Activated B cell treated with CpG ODN at 0.5 μM for 24 hours (primary cell): ENCODE measurements at regions of chr17 and their contacts with region 1.

Region 1: DNA sequence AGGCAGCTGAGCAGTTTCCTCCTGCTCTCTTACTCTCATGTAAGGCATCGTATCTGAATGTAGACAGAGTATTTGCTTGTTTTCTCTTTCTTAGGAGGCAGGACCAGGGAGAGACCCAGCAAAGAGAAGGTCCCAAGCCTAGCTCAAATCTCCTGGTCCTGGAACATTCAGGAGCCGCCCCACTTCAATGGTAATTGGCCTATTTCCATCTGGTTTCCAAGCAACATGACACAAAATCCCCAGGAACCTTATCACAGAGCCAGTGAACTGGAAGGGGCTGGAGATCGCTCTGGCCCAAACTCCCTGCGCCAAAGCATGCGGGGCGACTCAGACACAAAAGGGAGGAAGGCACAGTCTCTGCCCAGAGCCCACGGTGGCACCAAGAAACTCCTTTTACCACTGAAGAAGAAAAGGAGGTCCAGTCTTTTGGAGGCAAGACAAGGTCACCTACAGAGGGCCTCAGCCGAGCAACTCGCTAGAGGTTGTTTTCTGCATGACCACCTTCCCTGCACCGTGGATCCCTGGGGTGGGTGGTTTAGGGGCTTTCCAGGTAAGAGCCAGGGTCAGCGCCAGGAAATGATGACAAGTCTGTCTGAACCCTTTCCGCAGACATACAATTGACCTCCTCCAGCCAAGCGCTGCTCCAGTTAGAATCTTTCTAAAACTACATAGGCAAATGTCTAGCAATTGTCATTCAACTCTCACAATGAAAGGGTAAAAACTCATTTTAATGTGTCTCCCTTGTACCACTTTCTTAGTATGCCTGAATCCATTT is 394.7 kb downstream of the SOX9 start:
- DNase-seq: no peak
- ATAC-seq: peak; percentile 34
- H3K4me3 Mint-ChIP-seq: no peak overlapping the region
- H3K27ac Mint-ChIP-seq: no peak overlapping the region
- H3K4me1 Mint-ChIP-seq: peaks cover 4% of the 10 kb centered on the region
- H3K27me3 Mint-ChIP-seq: no peaks in the 10 kb centered on the region
- CTCF ChIP-seq: no peak

Region 2: DNA sequence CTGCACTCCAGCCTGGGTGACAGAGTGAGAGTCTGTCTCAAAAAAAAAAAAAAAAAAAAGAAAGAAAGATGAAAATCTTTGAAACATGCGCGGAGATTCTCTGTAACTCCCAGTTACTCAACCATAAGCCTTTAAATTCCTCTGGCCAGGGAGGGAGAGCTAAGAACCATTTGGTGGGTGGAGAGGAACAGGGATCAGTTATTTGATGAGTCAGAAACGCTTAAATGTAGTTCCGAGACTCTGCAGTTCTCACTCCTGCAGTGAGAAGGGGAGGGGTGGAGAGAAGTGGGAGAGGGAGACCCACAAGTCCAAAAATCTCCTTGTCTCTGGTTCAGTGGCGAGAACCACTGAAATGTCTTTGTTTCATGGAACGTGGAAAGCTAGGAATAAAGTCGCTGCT is 128.0 kb before region 1 on chr17:
- CTCF ChIA-PET with region 1: no interaction called
- POLR2A ChIA-PET with region 1: no interaction called
- intact Hi-C with region 1: no loop called
- DNase-seq: no peak
- ATAC-seq: no peak
- H3K4me3 Mint-ChIP-seq: no peak overlapping the region
- H3K27ac Mint-ChIP-seq: no peak overlapping the region
- H3K4me1 Mint-ChIP-seq: peaks cover 2% of the 10 kb centered on the region
- H3K27me3 Mint-ChIP-seq: peaks cover 5% of the 10 kb centered on the region
- CTCF ChIP-seq: no peak

Region 3: DNA sequence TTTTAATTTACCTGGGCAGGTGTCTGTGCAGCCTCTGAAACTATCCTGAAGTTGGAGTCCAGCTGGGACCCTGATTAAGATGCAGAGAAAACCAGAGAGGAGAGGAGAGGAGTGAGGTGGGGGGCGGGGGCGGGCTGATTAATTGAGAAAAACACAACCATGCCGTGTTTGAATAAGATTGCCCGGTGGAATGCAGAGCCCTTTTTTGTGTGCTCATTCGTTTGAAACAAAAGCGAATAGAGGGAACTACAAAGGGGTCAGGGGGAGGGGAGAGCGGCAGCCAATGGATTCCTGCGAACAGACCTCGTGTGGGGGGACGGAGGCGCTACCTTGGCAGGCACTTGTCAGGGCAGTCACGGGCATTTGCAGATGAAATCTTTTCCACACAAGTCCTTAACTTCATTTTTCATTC is 38.9 kb before region 1 on chr17:
- CTCF ChIA-PET with region 1: no interaction called
- POLR2A ChIA-PET with region 1: interaction called, 12 read pairs
- intact Hi-C with region 1: no loop called
- DNase-seq: no peak
- ATAC-seq: no peak
- H3K4me3 Mint-ChIP-seq: no peak overlapping the region
- H3K27ac Mint-ChIP-seq: no peak overlapping the region
- H3K4me1 Mint-ChIP-seq: no peaks in the 10 kb centered on the region
- H3K27me3 Mint-ChIP-seq: peaks cover 21% of the 10 kb centered on the region
- CTCF ChIP-seq: no peak